Activated B cell treated with CpG ODN at 0.5 μM for 24 hours (primary cell): ENCODE measurements at regions of chr1 and their contacts with region 1.

Region 1: GRCh38 chr1:25895365-25895993 is 10.7 kb downstream of the STMN1 start:
- DNase-seq: peak; percentile 80
- ATAC-seq: peak; percentile 100
- H3K4me3 Mint-ChIP-seq: peak overlapping the region; percentile 3
- H3K27ac Mint-ChIP-seq: peak overlapping the region; percentile 22
- H3K4me1 Mint-ChIP-seq: peaks cover 7% of the 10 kb centered on the region
- H3K27me3 Mint-ChIP-seq: no peaks in the 10 kb centered on the region
- CTCF ChIP-seq: peak; percentile 74

Region 2: GRCh38 chr1:25031966-25032667 is 863.4 kb before region 1 on chr1:
- CTCF ChIA-PET with region 1: no interaction called
- POLR2A ChIA-PET with region 1: no interaction called
- intact Hi-C with region 1: no loop called
- DNase-seq: peak; percentile 61
- ATAC-seq: peak; percentile 50
- H3K4me3 Mint-ChIP-seq: peak overlapping the region; percentile 80
- H3K27ac Mint-ChIP-seq: peak overlapping the region; percentile 97
- H3K4me1 Mint-ChIP-seq: peaks cover 3% of the 10 kb centered on the region
- H3K27me3 Mint-ChIP-seq: no peaks in the 10 kb centered on the region
- CTCF ChIP-seq: no peak

Region 3: DNA sequence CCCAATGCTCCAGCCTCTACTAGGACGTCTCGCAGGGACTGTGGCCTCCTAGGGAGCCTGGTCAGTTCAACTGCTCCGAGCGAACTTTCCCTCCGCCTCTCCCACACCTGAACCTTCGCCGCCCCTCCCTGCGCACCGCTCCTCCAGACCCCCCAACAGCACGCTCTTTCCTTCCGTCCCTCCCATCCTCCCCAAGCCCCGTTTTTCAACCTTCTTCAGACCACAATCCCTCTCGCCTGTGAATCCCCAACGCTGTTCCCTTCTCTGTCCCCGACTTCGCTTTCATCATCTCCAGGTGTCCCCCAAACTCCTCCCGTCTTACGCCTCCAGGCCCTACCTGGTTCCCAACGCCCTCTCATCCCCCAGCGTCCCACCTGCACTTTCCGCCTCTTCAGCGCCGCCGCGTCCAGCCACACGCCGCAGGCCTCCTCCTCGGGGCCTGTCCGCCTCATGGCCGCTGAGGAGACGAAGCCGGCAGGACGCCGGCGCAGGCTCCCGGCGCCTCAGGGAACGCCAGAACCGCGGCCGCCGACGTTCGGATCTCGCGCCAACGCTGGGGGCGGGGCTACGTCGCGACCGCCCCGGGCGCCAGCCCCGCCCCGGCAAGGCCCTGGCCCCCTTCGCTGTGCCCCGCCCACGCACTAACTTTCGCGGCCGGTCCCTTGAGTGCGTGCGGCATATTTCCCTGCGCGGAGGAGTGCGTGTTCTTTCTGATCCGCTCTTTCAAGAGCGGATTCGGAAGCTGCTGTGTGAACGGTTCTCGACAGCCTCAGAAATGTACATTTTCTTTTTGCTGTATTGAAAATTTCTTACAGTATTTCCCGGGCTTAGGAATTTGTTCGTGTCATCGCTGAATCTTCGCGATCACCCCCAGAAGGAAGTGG is 36.3 kb before region 1 on chr1 and contains the start of gene AUNIP:
- CTCF ChIA-PET with region 1: no interaction called
- POLR2A ChIA-PET with region 1: no interaction called
- intact Hi-C with region 1: loop called (anchors 1 kb)
- DNase-seq: peak; percentile 90
- ATAC-seq: peak; percentile 99
- H3K4me3 Mint-ChIP-seq: peak within 1 kb of the TSS; percentile 91
- H3K27ac Mint-ChIP-seq: peak within 1 kb of the TSS; percentile 94
- H3K4me1 Mint-ChIP-seq: peaks cover 28% of the 10 kb centered on the region
- H3K27me3 Mint-ChIP-seq: no peaks in the 10 kb centered on the region
- CTCF ChIP-seq: no peak
- total RNA-seq, gene AUNIP: 0.42 and 0.64 TPM in 2 replicates

Region 4: GRCh38 chr1:25971066-25971810 is 75.8 kb after region 1 on chr1:
- CTCF ChIA-PET with region 1: interaction called, 7 read pairs
- POLR2A ChIA-PET with region 1: no interaction called
- intact Hi-C with region 1: loop called (anchors 1 kb)
- DNase-seq: no peak
- ATAC-seq: peak; percentile 82
- H3K4me3 Mint-ChIP-seq: peak overlapping the region; percentile 26
- H3K27ac Mint-ChIP-seq: peak overlapping the region; percentile 84
- H3K4me1 Mint-ChIP-seq: peaks cover 17% of the 10 kb centered on the region
- H3K27me3 Mint-ChIP-seq: no peaks in the 10 kb centered on the region
- CTCF ChIP-seq: no peak

Region 5: GRCh38 chr1:26009796-26010460 is 114.4 kb after region 1 on chr1:
- CTCF ChIA-PET with region 1: interaction called, 11 read pairs
- POLR2A ChIA-PET with region 1: no interaction called
- intact Hi-C with region 1: no loop called
- DNase-seq: no peak
- ATAC-seq: no peak
- H3K4me3 Mint-ChIP-seq: no peak overlapping the region
- H3K27ac Mint-ChIP-seq: no peak overlapping the region
- H3K4me1 Mint-ChIP-seq: no peaks in the 10 kb centered on the region
- H3K27me3 Mint-ChIP-seq: peaks cover 9% of the 10 kb centered on the region
- CTCF ChIP-seq: no peak

Region 6: DNA sequence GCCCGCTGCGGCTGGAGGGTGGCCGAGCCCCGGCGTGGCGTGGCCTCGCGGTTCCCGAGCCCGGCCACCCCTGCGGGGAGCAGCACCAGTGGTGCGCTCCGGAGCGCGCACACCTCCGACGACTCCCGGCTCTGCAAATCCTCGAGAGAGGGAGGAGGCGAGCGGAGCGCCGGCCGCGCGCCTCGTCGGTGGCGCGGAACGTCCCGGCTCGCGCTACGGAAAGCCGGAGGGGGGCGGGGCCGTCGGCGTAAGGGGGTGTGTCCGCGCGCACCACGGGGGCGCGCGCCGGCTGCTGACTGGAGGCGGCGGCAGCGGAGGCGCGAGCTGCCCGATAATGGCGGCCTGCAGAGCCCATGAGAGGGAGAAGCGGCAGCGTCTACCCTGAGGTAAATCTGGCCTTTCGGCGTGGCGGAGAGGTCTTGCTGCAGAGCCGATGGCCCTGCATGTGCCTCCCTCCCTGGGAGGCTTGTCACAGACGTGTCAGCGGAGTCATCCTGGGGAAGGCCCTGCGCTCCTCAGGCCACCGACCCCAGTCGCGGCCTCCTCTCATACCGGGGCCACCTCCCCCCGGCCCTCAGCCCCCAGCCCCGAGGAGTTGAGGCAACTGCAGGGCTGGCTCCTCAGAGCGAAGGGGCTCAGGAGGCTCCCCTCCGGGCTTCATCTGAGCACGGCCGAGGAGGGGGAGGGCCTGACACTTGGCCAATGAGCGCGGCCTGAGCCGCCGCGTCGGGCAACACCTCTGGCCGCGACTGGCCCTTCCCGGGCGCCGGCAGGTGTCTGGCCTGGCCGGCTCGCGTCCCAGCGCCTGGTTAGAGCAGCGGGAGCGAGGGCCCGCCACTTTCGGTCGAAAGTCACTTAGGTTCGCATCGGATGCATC is 216.3 kb after region 1 on chr1 and contains the start of gene PDIK1L:
- CTCF ChIA-PET with region 1: no interaction called
- POLR2A ChIA-PET with region 1: no interaction called
- intact Hi-C with region 1: no loop called
- DNase-seq: peak; percentile 90
- ATAC-seq: peak; percentile 80
- H3K4me3 Mint-ChIP-seq: peak within 1 kb of the TSS; percentile 94
- H3K27ac Mint-ChIP-seq: peak within 1 kb of the TSS; percentile 89
- H3K4me1 Mint-ChIP-seq: peaks cover 20% of the 10 kb centered on the region
- H3K27me3 Mint-ChIP-seq: no peaks in the 10 kb centered on the region
- CTCF ChIP-seq: no peak
- total RNA-seq, gene PDIK1L: 9.4 and 10.5 TPM in 2 replicates